GM10248 (cell line): ENCODE measurements at regions of chr16 and their contacts with region 1.

Region 1: DNA sequence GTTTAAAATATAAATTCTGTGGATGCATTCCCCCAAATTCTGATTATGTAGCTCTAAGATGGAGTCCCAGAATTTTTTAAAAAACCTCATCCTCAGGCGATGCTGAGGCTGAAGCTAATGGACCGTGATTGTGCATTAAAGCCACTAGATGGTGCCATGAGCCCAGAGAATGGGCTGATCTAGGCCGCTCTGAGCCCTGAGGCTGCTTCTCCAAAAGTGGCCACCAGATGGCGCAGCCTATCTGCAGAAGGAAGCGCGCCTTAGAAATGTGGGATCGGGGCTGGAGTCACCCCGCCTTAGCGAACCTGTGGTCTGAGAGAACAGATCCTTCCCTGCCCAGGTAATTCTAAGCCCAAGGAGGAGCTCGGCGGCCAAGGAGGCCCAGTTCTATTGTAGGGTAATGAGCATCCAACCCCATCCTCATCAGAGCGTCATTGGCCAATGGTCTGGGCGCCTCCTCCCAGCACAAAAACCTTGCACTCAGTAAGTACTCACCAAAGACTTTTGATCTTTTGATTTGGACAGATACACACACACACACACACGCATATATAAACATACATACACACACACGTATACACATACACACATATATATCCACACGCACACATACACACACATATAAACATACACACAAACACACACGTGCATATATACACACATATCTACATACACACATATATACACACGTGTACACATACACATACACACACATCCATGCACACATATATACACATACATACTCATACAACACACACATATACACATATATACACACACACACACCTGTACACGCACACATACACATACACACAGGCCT is 13.7 kb upstream of the MMP2 start:
- DNase-seq: peak; percentile 85
- CTCF ChIP-seq: peak; percentile 100

Region 2: GRCh38 chr16:55453909-55454308 is 11.4 kb before region 1 on chr16:
- CTCF ChIA-PET with region 1: interaction called, 81 read pairs
- POLR2A ChIA-PET with region 1: no interaction called
- DNase-seq: no peak
- CTCF ChIP-seq: no peak

Region 3: DNA sequence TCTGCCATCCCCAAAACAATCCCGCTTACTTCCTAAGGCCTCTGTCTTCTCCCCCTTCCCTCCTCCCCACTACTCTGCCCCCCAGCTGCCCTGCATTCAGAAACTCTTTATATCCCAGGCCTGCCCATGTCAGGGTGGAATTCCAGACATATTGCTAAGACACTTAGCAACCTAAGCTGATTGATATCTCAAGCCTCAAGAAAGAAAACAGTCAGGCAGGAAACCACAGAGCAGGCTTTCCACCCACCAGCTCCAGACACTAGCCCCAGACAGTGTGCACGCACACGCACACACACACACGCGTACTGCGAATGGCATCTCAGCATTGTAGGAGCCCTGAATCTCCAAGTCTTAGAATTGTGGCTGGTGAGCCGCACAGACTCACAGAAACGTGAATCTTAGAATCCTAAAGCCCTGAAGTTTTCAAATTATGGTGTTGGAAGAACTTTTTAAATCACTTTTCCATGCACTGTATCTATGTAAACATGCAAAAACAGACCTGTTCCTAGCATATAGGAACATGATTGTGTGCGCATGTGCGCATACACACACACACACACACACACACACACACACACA is 34.8 kb after region 1 on chr16:
- CTCF ChIA-PET with region 1: interaction called, 11 read pairs
- POLR2A ChIA-PET with region 1: no interaction called
- DNase-seq: peak; percentile 4
- CTCF ChIP-seq: no peak

Region 4: DNA sequence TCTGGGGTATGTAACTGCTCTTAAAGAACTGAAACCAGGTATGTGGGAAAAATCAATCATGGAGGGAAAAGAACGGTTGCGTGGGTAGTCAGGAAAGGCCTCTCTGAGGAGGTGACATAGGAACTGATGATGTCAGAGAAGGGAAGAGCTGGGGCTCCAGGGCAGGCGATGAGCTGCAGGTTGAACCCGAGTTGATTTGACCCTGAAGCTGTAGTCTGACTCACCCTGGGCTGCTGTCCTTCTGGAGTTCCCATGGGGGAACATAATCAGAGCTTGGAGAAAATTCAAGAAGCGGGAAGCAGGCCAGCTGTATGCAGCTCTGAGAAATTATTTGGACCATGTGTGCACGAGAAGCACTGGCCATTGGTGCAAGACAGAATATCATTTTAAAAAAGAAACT is 207.2 kb after region 1 on chr16:
- CTCF ChIA-PET with region 1: interaction called, 12 read pairs
- POLR2A ChIA-PET with region 1: no interaction called
- DNase-seq: no peak
- CTCF ChIP-seq: no peak

Region 5: GRCh38 chr16:55711959-55712876 is 246.9 kb after region 1 on chr16:
- CTCF ChIA-PET with region 1: interaction called, 176 read pairs
- POLR2A ChIA-PET with region 1: no interaction called
- DNase-seq: peak; percentile 59
- CTCF ChIP-seq: peak; percentile 72

Region 6: DNA sequence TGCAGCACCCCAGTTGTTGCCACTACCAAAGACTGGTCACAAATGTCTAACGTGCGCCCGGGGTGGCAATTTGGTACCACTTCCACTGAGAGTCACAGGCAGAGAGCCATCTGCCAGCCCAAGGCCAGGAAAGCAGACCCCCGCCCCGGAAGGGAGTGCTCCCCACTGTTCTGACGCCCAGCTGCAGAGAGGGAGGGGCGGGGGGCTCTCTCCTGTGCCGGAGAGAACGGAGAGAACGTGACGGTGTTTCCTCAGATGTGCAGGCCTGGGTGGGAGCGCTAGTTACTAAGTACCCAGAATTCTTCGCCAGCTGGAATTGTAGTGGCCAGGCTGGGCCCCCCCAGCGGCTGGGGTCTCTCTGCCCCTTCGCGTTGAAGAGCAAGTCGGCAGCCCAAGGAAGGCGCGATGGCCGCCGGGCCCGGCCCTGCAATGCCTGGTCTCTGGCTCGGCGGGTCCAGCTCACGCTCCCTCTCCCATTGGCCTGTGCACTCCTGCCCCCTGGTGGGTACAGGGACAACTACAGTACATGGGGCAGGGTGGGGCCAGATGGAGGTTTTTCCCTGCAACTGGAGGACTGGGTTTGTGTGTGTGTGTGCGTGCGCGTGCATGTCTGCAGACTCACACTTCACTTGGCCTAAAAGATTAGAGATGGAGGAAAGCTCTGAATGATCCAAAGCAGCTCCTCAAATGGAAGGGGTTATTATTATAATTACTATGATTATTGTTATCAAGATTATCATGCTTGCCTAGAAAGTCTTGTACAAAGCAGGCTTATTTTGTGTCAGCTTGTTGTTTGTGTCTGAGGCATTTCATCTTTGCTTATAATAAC is 852.9 kb after region 1 on chr16:
- CTCF ChIA-PET with region 1: interaction called, 14 read pairs
- POLR2A ChIA-PET with region 1: no interaction called
- DNase-seq: peak; percentile 91
- CTCF ChIP-seq: peak; percentile 89